Dorsolateral prefrontal cortex (tissue), 120 donors: ENCODE measurements at regions of chr14 and their contacts with region 1.

Region 1: DNA sequence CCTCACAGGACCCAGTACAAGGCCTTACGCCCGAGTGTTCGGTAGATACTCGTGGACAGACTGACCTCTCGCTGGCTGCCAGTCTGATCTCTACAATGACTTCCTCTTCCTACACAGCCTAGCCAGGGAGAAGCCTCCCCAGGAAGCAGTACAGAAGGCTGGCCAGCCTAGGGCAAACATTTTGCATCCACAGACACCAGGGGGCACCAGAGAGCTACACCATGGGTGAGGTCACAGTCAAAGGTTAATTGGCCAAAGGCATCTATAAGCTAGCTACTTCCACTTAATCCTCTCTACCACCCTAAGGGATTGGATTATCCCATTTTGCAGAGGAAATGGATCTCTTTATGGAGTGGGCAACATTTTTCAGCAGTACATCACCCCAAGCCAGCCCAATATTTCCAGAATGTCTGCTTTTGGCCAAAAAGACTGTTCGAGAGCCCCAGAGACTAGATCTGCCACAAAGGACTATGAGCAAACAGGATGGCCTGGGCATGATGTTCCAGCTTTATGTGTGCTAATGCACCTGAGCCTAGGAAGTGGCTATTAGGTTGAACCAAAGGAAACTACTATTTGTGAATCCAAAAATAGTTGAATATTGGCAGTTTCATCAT is 14.6 kb upstream of the PNMA1 start:
- DNase-seq: peak in 8 of 10 donors; percentile 76 to 88 (median 82)
- H3K4me3 ChIP-seq: peak overlapping the region in 1 of 59 donors; percentile 4
- H3K27ac ChIP-seq: peak overlapping the region in 49 of 59 donors; percentile 0 to 74 (median 45)
- H3K27me3 ChIP-seq: no peaks in the 10 kb centered on the region
- CTCF ChIP-seq: peak; percentile 88 to 99 (median 96)

Region 2: DNA sequence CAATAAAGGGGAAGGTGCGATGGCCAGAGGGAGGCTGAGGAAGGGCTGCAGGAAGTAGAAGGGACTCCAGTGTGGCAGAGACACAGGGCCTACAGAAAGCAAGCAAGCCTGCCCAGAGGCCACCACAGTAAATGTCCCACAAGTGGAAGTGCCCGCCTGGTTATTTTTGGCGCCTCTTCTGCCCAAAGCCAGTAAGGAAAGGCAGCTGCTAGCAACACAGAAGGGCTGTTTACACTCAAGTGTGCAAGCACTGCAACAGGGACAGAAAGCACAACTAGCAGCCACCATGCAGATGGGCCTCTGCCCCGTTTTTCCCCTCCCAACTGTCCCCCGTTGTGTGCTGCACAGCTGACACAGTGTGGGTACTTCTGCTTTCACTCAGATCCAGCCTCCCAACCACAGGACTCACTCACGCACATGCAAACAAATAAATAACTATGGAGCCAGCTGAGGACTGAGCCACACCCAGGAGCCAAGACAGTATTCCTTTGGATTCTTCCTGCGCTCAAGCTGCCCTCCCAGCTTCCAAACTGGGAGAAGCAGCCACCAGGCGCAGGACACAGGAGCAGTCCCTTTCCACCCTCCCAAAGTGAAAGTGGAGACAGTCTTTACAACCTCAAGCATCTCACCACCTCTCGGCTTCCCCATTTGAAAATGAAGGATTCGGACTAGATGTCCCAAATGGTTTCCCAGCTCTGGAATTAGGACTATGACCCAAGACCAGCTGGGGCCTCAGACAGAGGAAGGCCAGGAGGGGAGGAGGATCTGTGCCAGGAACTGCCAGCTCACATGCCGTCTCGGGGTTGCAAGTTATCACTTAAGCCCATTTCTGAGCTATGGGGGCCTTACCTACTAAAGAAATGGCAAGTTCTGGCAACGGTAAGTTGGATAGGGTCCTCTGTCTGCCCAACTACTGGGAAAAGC is 25.4 kb after region 1 on chr14:
- intact Hi-C with region 1: loop called in 1 of 2 experiments (anchors 2 kb)
- DNase-seq: peak in 7 of 10 donors; percentile 48 to 75 (median 66)
- H3K4me3 ChIP-seq: peak overlapping the region in 54 of 59 donors; percentile 1 to 53 (median 30)
- H3K27ac ChIP-seq: peak overlapping the region; percentile 49 to 99 (median 91)
- H3K27me3 ChIP-seq: no peaks in the 10 kb centered on the region
- CTCF ChIP-seq: peak in 2 of 56 donors; percentile 18 to 25